ENCODE measurements at regions of chr6 and their contacts with region 1.

Region 1: DNA sequence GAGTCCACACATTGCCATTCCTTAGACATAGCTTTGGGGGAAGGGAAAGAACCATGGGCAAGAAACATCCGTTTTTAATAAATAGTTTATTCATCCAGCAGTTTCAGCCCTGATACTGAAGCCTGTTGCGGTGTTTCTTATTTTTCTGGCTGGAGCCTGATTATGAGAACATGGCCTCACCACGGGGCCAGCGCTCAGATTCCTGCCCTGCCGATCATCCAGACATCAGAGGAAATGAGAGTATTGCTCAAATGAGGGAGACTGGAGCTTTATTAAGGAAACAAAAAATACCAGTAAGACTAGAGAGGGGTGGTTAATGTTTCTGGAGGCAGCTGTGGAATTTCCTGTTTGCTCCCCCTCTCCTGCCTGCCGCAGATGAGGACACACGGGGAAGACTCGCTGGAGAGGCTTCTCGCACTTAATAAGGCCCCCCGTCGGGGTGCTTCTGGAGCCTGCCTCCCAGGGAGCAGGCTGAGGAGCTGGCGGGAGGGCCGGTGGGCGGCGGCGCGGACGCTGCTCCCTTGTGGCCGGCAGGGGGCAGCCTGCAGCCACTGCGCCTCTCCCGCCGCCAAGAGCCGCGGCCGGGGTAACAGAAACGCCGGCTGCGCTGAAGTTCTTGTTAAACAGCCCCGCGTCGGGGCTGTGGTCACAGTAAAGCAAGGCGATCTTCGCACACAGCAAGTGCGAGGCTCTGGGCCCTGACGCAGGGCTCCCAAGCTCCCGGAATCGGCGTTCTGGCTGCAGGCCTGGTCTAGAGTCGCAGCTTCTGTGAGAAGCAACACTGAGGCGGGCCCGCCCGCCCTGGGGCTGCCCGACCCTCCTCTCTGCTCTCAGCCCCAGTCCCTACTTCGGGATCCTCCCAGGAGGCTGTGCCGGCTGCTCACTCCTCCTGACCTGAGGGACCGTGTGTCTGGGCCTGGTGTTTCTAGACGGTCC is 17.5 kb downstream of the LEMD2 start:
- DNase-seq: no peak
- H3K4me3 ChIP-seq: peak overlapping the region; percentile 5 to 32 (median 24)
- H3K27ac ChIP-seq: peak overlapping the region; percentile 64 to 84 (median 72)
- H3K4me1 ChIP-seq: peaks cover 23 to 45% (median 43%) of the 10 kb centered on the region in 4 donors
- H3K27me3 ChIP-seq: peaks cover 0 to 6% (median 0%) of the 10 kb centered on the region in 4 donors
- CTCF ChIP-seq: peak in 2 of 3 experiments; percentile 92 to 96
- EP300 ChIP-seq: no peak
- POLR2A ChIP-seq: no peak

Region 2: DNA sequence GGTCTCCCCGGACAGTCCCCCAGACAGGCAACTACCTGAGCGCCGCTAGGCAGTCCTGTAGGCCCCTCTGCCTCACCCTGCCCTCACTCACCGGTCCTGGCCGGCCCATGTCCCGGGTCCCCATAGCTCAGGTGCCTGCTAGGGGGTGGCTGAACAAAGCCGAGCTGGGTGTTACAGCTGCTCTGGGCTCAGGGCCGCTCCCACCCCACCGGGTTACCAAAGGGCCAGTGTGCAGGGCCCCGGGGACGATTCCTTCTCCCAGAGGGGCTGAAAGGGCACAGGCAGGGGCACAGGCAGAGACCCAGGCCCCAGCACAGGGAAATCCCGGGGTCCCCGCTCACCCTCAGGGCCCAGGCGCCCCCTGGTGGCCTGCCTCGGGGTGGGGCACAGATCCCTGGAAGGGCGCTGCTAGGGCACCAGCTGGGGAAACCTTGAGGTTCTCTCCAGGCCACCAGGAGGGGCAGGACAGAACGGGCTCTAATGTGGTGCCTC is 256.1 kb after region 1 on chr6:
- intact Hi-C with region 1: loop called (anchors 5 kb)
- DNase-seq: no peak
- H3K4me3 ChIP-seq: no peak overlapping the region
- H3K27ac ChIP-seq: no peak overlapping the region
- H3K4me1 ChIP-seq: no peaks in the 10 kb centered on the region
- H3K27me3 ChIP-seq: peaks cover 0 to 64% (median 0%) of the 10 kb centered on the region in 4 donors
- CTCF ChIP-seq: peak; percentile 52 to 69 (median 60)
- EP300 ChIP-seq: no peak
- POLR2A ChIP-seq: no peak

Region 3: DNA sequence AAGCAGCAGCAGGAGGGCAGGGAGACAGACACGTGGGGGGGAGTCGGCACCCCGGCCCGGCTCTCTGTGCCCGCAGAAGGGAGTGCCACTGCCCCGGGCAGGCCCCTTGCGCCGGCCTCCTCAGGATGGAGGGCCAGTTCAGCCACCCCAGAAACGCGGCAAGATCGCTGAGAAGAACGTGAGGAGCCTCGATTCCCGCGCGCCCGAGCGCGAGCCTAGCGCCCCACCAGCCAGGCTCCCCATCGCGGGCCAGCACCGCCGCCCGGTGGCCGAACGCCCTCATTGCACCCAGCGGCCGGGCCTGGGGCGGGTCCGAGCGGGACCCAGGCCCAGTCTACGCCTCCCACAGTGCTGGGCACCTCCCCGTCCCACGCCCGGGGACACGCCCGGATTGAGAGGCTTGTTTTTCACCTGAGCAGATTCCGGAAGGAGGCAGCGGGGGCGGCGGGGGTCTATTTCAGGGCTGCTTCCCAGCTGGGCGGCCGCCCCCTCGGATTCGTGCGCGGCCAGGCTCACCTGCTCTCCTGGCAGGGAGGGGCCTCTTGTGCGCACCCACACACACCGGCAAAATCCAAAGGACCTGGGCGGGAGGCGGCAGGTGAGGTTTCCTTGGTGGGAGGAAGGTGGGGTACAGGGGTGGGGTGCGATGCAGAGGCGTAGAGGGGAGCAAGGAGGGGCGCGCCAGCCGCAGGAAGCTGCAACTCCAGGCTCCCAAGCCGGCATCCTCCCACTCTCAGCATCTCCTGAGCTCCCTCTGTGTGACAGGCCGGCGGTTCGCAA is 383.4 kb after region 1 on chr6:
- intact Hi-C with region 1: loop called (anchors 5 kb)
- DNase-seq: no peak
- H3K4me3 ChIP-seq: peak overlapping the region; percentile 15 to 44 (median 24)
- H3K27ac ChIP-seq: no peak overlapping the region
- H3K4me1 ChIP-seq: peaks cover 5 to 10% (median 8%) of the 10 kb centered on the region in 4 donors
- H3K27me3 ChIP-seq: peaks cover 4 to 81% (median 21%) of the 10 kb centered on the region in 4 donors
- CTCF ChIP-seq: peak; percentile 90 to 98 (median 95)
- EP300 ChIP-seq: no peak
- POLR2A ChIP-seq: no peak

Measured in esophagus muscularis mucosa (tissue), 4 donors.